PC-3 (cell line): ENCODE measurements at regions of chr2 and their contacts with region 1.

Region 1: GRCh38 chr2:180208841-180209240 is 201.7 kb upstream of the CWC22 start:
- DNase-seq: peak; percentile 52
- ATAC-seq: no peak
- H3K4me3 ChIP-seq: no peak overlapping the region
- H3K27ac ChIP-seq: no peak overlapping the region
- H3K4me1 ChIP-seq: peaks cover 7% of the 10 kb centered on the region; the same call in 1 of the 2 replicates
- H3K27me3 ChIP-seq: no peaks in the 10 kb centered on the region
- CTCF ChIP-seq: no peak

Region 2: DNA sequence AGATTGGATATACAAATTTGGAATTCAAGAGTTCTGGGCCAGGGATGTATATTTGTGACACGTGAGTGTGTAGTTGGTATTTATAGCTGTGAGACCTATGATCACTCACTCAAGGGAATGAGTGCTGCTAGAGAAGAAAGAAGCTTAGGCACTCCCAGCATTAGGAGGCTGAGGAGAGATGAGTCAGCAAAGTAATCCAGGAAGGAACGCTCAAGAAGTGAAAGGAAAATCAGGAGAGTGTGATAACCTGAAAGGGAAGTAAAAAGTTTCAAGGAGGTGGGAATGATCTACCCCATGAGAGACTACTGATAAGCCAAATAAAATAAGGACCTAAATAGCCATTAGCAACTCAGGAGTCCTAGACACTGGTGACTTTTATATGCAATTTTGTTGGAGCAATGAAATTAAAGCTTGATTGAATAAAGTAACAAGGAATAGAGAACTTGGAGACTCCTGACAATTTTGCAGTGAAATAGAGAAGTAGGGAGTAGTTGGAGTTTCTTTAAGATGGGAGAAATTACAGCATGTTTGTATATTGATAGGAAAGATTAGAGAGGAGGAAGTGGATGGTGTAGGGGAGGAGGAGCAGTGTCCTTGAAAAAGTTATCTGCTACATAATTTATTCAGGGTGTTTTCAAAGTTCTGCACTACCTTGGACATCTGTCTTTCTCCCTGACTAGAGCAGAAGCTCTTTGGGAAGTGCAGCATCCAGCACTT is 861.4 kb after region 1 on chr2:
- CTCF ChIA-PET with region 1: no interaction called
- POLR2A ChIA-PET with region 1: interaction called, 12 read pairs
- intact Hi-C with region 1: no loop called
- DNase-seq: peak; percentile 69
- ATAC-seq: peak; percentile 81
- H3K4me3 ChIP-seq: no peak overlapping the region
- H3K27ac ChIP-seq: peak overlapping the region; percentile 6; the same call in 1 of the 2 replicates
- H3K4me1 ChIP-seq: peaks cover 15% of the 10 kb centered on the region
- H3K27me3 ChIP-seq: no peaks in the 10 kb centered on the region
- CTCF ChIP-seq: no peak